ENCODE measurements at regions of chr1 and their contacts with region 1.

Region 1: GRCh38 chr1:26111530-26112406 is at the start of gene PDIK1L:
- DNase-seq: peak; percentile 96
- ATAC-seq: peak; percentile 83
- H3K4me3 Mint-ChIP-seq: peak within 1 kb of the TSS; percentile 100
- H3K27ac Mint-ChIP-seq: peak within 1 kb of the TSS; percentile 94
- H3K4me1 Mint-ChIP-seq: peaks cover 21% of the 10 kb centered on the region
- H3K27me3 Mint-ChIP-seq: no peaks in the 10 kb centered on the region
- total RNA-seq, gene PDIK1L: 21.2 to 22.1 TPM

Region 2: DNA sequence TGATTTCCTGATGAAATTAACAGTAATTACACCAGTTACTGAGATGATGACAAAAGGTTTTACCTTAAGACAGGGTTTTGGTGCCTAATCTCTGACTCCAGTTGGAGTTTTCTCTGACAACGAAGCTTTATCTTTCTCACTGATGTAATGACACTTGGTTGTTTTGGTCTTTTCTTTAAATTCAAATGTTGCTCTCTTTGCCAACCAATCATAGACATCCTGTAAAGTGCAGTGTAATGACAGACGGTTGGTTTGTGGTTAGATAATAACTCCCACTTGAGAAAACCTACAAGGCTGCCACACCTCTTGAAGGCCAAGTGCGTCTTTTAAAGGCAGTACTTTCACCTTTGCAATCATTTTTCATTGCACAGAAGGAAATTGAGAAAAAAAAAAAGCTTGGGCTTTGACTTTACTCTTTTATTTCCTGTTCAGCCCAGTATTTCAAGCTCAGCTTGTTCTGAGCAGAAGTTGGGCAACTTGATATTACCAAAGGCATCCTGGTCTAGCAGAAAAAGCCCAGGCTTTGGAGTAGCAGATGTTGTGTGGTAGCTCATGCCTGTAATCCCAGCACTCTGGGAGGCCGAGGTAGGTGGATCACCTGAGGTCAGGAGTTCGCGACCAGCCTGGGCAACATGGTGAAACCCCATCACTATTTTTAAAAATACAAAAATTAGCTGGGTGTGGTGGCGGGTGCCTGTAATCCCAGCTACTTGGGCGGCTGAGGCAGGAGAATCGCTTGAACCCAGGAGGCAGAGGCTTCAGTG is 14.7 kb after region 1 on chr1:
- POLR2A ChIA-PET with region 1: interaction called, 40 read pairs
- DNase-seq: peak; percentile 42
- ATAC-seq: peak; percentile 97
- H3K4me3 Mint-ChIP-seq: peak overlapping the region; percentile 83
- H3K27ac Mint-ChIP-seq: peak overlapping the region; percentile 96
- H3K4me1 Mint-ChIP-seq: peaks cover 38% of the 10 kb centered on the region
- H3K27me3 Mint-ChIP-seq: no peaks in the 10 kb centered on the region

Region 3: DNA sequence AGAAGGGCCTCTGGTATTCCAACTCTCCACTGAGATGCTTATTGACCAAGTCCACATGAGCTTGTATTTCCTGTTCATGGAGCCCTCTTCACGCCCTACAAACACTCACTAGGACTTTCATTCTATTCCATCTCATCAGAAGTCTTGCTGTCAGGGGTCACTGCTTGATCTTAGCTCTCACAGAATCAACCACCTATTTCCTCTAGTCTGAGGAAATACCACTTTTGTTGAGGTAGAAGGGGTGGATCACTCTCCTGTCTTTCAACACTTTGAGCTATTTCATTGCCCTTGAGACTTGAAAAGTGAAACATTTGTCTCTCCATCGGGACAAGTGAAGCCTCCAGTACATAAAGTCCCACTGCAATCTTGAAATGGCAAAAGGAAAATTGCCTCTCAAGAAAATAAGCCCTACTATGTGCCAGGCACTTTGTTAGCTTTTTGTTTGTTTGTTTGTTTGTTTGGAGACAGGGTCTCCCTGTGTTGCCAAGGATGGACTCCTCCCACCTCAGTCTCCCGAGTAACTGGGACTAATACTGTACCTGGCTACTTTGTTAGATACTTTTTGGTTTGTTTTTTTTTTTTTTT is 27.3 kb after region 1 on chr1:
- POLR2A ChIA-PET with region 1: interaction called, 43 read pairs
- DNase-seq: no peak
- ATAC-seq: peak; percentile 95
- H3K4me3 Mint-ChIP-seq: peak overlapping the region; percentile 72
- H3K27ac Mint-ChIP-seq: peak overlapping the region; percentile 82
- H3K4me1 Mint-ChIP-seq: peaks cover 14% of the 10 kb centered on the region
- H3K27me3 Mint-ChIP-seq: peaks cover 7% of the 10 kb centered on the region